B cell (primary cell): ENCODE measurements at regions of chr1 and their contacts with region 1.

Region 1: DNA sequence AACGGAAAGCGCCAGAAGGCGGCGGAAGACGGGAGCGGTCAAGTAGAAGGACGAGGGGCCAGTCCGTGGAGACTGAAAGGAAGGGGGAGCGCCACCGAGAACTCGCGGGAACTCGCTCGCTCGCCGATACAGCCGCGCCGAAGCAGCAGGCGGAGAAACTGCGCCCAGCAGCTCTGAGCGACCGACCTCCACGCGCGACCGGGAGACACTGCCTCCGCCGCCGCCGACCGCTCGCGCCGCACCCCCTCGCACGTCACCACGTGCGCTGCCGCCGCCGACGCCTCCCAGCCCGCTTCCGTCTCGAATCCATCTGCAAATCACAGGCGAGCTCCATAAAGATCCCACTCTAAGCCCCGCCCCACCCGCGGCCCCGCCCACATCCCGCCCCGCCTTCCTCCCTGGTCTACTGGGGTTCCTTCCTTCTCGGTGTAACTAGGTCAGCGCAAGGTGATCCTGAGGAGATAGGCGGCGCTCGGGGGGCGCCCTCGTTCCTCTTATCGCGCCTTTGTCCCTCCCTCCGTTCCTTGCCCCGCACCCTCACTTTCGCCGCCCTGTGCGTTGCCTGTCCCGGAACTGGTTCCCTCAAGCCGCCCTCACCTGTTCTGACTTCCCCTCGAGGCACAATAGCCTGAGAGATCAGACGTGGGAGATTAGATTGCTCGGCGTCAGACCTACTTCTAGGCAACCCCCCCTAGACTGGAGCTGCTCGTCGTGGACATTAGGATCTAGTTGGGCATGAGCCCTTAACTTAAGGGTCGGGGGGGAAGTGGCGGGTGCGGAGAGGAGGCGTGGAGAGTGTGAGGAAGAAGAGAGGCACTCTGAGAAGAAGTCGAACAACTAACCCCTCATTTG is at the start of gene IVNS1ABP:
- DNase-seq: peak; percentile 98
- ATAC-seq: peak; percentile 76
- H3K4me3 ChIP-seq: peak within 1 kb of the TSS; percentile 94 to 98 (median 96)
- H3K4me3 Mint-ChIP-seq: peak within 1 kb of the TSS; percentile 92
- H3K27ac ChIP-seq: peak within 1 kb of the TSS; percentile 95 to 98
- H3K27ac Mint-ChIP-seq: peak within 1 kb of the TSS; percentile 98
- H3K4me1 ChIP-seq: peaks cover 34 to 41% of the 10 kb centered on the region in 2 donors
- H3K4me1 Mint-ChIP-seq: peaks cover 49% of the 10 kb centered on the region
- H3K27me3 ChIP-seq: no peaks in the 10 kb centered on the region
- H3K27me3 Mint-ChIP-seq: no peaks in the 10 kb centered on the region
- CTCF ChIP-seq: peak; percentile 39
- total RNA-seq, gene IVNS1ABP: 87.0 and 93.8 TPM in 2 replicates

Region 2: DNA sequence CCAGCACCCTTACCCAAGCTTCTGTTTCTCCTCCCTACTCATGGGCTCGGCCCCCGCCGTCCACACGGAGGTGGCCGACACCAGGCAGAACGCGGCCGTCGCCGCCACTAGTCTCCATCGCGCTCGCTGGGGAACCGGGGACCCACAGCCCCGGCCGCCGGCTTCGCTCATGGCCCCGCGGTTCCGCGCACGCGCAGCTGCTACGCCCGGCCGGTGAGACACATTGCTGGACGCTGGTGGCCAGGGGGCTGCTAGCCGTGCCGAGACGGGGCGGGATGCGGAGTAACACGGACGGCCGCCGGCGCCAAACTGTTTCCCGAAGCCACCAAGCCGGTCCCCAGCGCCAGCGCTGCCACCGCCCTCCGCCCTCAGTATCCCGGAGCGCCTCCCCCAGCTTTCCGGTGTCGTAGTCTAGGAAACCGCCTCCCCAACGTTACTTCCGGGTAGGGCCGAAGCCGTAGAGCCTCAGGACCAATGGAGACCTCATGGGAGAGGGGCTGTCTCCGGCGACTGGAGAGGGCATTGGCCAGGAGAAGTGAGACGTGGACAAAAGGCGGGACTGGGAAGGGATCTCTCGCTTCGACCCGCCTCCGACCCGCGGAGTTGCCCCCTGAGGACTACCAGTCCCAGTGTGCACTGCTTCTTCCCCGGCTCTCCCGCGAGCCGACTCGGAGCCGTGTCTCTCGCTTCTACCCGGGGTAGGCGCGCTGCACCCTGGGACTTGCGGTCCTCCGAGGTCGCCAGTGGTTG is 562.6 kb before region 1 on chr1 and contains the start of gene EDEM3:
- CTCF ChIA-PET with region 1: no interaction called
- POLR2A ChIA-PET with region 1: no interaction called
- intact Hi-C with region 1: loop called (anchors 1 kb)
- DNase-seq: peak; percentile 98
- ATAC-seq: peak; percentile 94
- H3K4me3 ChIP-seq: peak within 1 kb of the TSS; percentile 76 to 98 (median 93)
- H3K4me3 Mint-ChIP-seq: peak within 1 kb of the TSS; percentile 95
- H3K27ac ChIP-seq: peak within 1 kb of the TSS; percentile 68 to 86
- H3K27ac Mint-ChIP-seq: peak within 1 kb of the TSS; percentile 94
- H3K4me1 ChIP-seq: peaks cover 16% of the 10 kb centered on the region in 2 donors
- H3K4me1 Mint-ChIP-seq: peaks cover 26% of the 10 kb centered on the region
- H3K27me3 ChIP-seq: peaks cover 0 to 7% (median 1%) of the 10 kb centered on the region in 4 experiments
- H3K27me3 Mint-ChIP-seq: peaks cover 9% of the 10 kb centered on the region
- CTCF ChIP-seq: no peak
- total RNA-seq, gene EDEM3: 20.9 and 23.1 TPM in 2 replicates

Region 3: DNA sequence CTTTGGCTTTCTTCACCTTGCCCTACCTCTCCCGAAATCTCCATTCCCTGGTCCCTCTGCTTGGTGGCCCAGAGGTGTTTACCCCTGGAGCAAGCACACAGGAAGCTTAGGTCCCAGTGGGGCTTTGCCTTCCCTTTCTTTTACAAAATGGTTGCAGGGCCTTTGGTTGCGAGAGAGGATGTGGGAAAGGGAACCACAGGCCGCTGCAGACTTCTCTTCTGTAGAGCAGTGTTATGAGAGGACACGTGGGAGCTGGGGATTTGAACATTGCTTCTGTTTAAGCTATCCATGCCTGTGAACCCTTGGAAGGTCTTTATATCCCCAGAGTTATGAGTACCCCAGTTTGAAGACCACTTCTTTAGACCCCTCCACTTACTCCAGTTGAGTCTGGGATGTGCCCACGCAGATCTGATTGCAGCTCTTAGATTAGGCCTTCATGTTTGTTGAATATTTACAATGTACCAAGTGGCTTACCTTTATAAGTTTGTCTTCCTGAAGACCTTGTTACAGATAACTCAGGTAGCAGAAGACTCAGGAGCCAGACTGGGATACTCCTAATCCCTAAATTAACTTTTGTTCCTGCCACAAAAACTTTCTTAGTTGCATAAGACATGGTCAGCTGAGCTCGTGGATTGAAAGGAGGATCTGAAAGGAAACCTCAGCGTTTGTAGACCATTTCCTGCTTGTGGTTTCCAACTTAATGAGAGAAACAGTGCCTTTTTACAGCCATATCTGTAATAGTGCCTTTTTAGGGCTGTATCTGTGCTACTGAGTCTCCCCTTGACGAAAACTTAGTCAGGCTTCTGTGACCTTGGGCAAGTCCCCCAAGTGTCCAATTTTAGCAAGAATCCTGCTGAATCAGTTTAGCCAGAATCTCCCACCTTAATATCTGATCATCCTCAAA is 21.7 kb after region 1 on chr1:
- CTCF ChIA-PET with region 1: interaction called, 3 read pairs
- POLR2A ChIA-PET with region 1: interaction called, 6 read pairs
- intact Hi-C with region 1: loop called (anchors 1 kb)
- DNase-seq: peak; percentile 72
- ATAC-seq: peak; percentile 88
- H3K4me3 ChIP-seq: peak overlapping the region in 2 of 5 experiments; percentile 30 to 37
- H3K4me3 Mint-ChIP-seq: peak overlapping the region; percentile 76
- H3K27ac ChIP-seq: peak overlapping the region; percentile 50 to 52
- H3K27ac Mint-ChIP-seq: peak overlapping the region; percentile 83
- H3K4me1 ChIP-seq: peaks cover 23 to 24% of the 10 kb centered on the region in 2 donors
- H3K4me1 Mint-ChIP-seq: peaks cover 26% of the 10 kb centered on the region
- H3K27me3 ChIP-seq: no peaks in the 10 kb centered on the region
- H3K27me3 Mint-ChIP-seq: no peaks in the 10 kb centered on the region
- CTCF ChIP-seq: no peak

Region 4: DNA sequence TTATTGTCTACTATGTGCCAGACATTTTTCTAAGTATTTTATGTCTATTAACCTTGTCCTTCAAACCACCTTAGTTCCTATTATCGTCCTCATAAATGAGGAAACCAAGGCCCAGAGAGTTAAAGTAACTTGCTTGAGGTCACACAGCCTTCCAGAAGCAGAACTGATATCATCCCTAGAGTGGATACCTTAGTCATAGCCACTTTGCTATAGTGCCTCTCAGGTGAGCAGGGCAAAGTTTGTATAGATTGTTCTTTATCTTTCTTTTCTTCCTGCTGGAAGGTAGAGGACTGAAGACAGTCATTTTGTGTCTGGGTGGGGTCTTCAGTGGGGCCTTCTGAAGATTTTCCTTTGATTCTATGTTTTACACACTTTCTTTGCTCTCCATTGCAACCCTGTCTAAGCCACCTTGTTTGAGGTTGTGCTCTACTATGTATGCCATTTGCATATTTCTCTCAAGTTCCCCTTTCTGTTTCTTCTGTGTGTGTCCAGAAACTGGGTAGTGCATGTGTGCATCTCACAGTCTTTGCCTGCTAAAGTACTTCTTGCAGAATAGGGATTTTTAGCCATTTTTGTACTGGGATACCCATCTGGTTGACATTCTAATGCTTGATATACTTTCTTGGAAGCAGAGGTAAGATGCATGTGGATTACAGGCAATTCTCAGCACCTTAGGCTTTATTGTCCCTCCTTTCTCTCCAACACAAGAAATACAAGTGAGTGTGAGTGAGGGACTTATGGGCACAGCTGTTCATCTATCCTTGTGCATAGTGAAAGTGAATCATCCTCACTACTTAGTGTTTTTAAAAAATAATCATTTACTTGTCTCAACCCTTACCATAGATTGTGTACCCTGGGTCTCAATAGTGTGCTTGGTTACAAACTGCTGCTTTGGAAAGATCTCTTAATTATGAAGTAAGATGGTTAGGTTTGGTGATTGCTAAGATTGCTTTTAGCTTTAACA is 209.4 kb after region 1 on chr1:
- CTCF ChIA-PET with region 1: no interaction called
- POLR2A ChIA-PET with region 1: no interaction called
- intact Hi-C with region 1: loop called (anchors 5 kb)
- DNase-seq: peak; percentile 71
- ATAC-seq: peak; percentile 98
- H3K4me3 ChIP-seq: no peak overlapping the region
- H3K4me3 Mint-ChIP-seq: peak overlapping the region; percentile 53
- H3K27ac ChIP-seq: peak overlapping the region; percentile 45 to 71
- H3K27ac Mint-ChIP-seq: peak overlapping the region; percentile 64
- H3K4me1 ChIP-seq: peaks cover 18 to 22% of the 10 kb centered on the region in 2 donors
- H3K4me1 Mint-ChIP-seq: peaks cover 19% of the 10 kb centered on the region
- H3K27me3 ChIP-seq: no peaks in the 10 kb centered on the region
- H3K27me3 Mint-ChIP-seq: no peaks in the 10 kb centered on the region
- CTCF ChIP-seq: no peak

Region 5: DNA sequence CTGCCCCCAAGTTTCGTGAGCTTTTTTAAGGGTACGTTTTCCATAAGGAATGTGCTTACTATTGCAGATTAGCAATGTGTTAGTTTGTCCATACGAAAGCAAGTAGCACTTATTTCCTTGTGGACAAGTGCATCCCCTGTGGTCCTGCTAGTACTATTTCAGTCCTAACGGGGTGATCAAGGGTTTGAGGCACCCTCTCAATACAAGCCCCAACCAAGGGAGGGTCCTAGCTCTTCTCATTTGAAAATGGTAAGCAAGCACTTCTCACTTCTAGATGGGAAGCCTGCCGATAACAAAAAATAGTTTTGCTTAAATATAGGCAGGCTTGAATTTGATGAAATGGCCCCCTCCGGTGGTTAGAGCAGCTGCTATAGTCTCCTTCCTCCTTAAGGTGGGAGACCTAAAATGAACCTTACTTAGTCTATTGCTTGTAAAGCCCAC is 352.9 kb after region 1 on chr1:
- CTCF ChIA-PET with region 1: interaction called, 50 read pairs
- POLR2A ChIA-PET with region 1: interaction called, 11 read pairs
- intact Hi-C with region 1: loop called (anchors 1 kb)
- DNase-seq: peak; percentile 73
- ATAC-seq: peak; percentile 65
- H3K4me3 ChIP-seq: no peak overlapping the region
- H3K4me3 Mint-ChIP-seq: no peak overlapping the region
- H3K27ac ChIP-seq: no peak overlapping the region
- H3K27ac Mint-ChIP-seq: no peak overlapping the region
- H3K4me1 ChIP-seq: peaks cover 24 to 26% of the 10 kb centered on the region in 2 donors
- H3K4me1 Mint-ChIP-seq: peaks cover 30% of the 10 kb centered on the region
- H3K27me3 ChIP-seq: no peaks in the 10 kb centered on the region
- H3K27me3 Mint-ChIP-seq: no peaks in the 10 kb centered on the region
- CTCF ChIP-seq: peak; percentile 73

Region 6: GRCh38 chr1:186082235-186082937 is 765.1 kb after region 1 on chr1:
- CTCF ChIA-PET with region 1: no interaction called
- POLR2A ChIA-PET with region 1: no interaction called
- intact Hi-C with region 1: loop called (anchors 10 kb)
- DNase-seq: peak; percentile 90
- ATAC-seq: peak; percentile 86
- H3K4me3 ChIP-seq: peak overlapping the region in 2 of 5 experiments; percentile 2 to 39
- H3K4me3 Mint-ChIP-seq: peak overlapping the region; percentile 62
- H3K27ac ChIP-seq: no peak overlapping the region
- H3K27ac Mint-ChIP-seq: peak overlapping the region; percentile 86
- H3K4me1 ChIP-seq: peaks cover 6 to 8% of the 10 kb centered on the region in 2 donors
- H3K4me1 Mint-ChIP-seq: peaks cover 37% of the 10 kb centered on the region
- H3K27me3 ChIP-seq: no peaks in the 10 kb centered on the region
- H3K27me3 Mint-ChIP-seq: no peaks in the 10 kb centered on the region
- CTCF ChIP-seq: no peak